ENCODE measurements at regions of chr1 and their contacts with region 1.

Region 1: DNA sequence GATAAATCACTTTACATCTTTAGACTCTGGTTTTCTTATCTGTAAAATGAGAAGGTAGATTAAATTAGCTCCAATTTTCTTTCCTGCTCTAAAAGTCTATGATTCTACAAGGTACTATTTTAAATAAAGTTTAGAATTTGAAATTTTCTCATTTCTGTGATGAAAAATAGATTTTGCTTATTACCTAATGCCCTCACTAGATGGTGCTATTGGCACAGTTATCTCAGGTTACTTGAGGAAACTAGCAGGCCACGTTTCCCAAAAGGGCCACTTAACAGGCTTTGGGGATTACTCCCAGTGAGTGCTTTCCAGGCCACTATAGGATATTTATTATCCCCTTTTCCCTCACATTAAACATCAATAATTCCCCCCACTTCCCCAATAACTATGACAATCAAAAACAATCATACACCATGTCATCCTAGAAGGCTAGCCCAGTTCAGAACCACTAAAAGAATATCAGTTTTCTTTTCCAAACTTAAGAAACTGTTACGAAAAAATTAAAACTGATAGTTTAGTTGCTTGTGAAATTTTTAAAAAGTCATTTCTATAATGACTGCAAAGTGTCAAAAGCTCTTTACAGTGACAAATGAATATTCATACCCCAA is 30.6 kb downstream of the OMA1 start:
- DNase-seq: peak; percentile 69
- ATAC-seq: peak; percentile 76
- H3K4me3 ChIP-seq: no peak overlapping the region
- H3K27ac ChIP-seq: no peak overlapping the region
- H3K4me1 ChIP-seq: no peaks in the 10 kb centered on the region
- H3K27me3 ChIP-seq: no peaks in the 10 kb centered on the region
- CTCF ChIP-seq: peak; percentile 49 to 77 (median 71)
- POLR2A ChIP-seq: no peak
- RAD21 ChIP-seq: peak; percentile 92

Region 2: DNA sequence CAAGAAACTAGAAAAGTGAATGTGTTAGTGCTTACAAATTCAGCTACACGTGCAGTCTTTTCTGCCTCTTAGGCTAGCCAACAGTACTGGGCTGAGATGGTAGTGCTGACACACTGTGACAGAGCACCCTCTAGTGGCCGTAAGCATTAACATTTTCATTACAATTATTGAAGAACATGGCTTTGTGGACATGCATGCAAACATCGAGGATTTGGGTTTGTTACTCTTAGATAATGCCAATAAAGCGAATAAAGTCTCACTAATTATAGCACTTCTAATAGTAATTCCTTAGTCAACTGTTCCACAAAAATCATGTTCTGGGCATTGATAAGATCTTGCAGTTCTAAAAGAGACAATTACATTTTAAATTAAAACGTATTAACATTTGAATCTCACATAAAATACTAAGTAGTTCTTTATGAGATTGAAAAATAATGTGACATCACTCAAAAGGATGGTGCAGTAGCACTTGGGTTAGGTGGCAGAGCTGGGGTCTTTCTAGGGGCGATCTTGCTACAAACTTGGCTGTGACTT is 136.8 kb after region 1 on chr1:
- CTCF ChIA-PET with region 1: interaction called, 33 read pairs
- POLR2A ChIA-PET with region 1: no interaction called
- RAD21 ChIA-PET with region 1: interaction called in 1 of 2 experiments, 4 read pairs
- intact Hi-C with region 1: loop called (anchors 1 kb)
- DNase-seq: peak; percentile 48
- ATAC-seq: peak; percentile 90
- H3K4me3 ChIP-seq: no peak overlapping the region
- H3K27ac ChIP-seq: no peak overlapping the region
- H3K4me1 ChIP-seq: no peaks in the 10 kb centered on the region
- H3K27me3 ChIP-seq: no peaks in the 10 kb centered on the region
- CTCF ChIP-seq: peak; percentile 69 to 92 (median 77)
- POLR2A ChIP-seq: no peak
- RAD21 ChIP-seq: peak; percentile 97

Region 3: DNA sequence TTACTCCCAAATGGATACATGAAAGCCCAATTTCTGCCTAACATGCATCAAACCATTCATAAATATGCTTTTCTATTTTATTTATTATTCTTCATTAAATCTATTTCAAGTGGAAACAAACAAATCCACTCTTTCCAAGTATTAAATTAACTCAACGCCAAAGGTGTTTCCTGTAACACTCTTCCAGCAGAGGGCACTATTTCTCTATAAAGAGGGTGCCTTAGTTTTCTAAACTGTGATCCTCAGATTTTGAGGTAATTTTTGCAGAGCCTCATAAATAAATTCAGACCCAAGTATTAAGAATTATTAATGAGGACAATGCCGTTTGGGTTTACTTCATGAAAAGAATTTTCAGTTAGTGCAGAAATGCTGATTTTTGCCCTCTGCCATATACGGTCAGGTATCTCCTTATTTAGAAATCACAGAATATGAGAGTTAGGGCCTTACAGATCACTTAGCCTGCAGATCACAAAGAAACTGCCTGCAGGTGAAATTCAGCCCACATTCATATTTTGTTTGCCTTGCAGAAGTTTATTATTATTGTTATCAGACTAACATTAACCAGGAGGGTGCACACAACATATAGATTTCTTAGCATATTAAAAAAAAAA is 224.1 kb after region 1 on chr1:
- CTCF ChIA-PET with region 1: no interaction called
- POLR2A ChIA-PET with region 1: no interaction called
- RAD21 ChIA-PET with region 1: no interaction called
- intact Hi-C with region 1: loop called (anchors 10 kb)
- DNase-seq: peak; percentile 39
- ATAC-seq: peak; percentile 75; the same call in 1 of the 2 replicates
- H3K4me3 ChIP-seq: no peak overlapping the region
- H3K27ac ChIP-seq: no peak overlapping the region
- H3K4me1 ChIP-seq: no peaks in the 10 kb centered on the region; a peak in 1 of 4 replicates
- H3K27me3 ChIP-seq: no peaks in the 10 kb centered on the region
- CTCF ChIP-seq: peak; percentile 59 to 87 (median 83)
- POLR2A ChIP-seq: no peak
- RAD21 ChIP-seq: peak; percentile 96

Region 4: DNA sequence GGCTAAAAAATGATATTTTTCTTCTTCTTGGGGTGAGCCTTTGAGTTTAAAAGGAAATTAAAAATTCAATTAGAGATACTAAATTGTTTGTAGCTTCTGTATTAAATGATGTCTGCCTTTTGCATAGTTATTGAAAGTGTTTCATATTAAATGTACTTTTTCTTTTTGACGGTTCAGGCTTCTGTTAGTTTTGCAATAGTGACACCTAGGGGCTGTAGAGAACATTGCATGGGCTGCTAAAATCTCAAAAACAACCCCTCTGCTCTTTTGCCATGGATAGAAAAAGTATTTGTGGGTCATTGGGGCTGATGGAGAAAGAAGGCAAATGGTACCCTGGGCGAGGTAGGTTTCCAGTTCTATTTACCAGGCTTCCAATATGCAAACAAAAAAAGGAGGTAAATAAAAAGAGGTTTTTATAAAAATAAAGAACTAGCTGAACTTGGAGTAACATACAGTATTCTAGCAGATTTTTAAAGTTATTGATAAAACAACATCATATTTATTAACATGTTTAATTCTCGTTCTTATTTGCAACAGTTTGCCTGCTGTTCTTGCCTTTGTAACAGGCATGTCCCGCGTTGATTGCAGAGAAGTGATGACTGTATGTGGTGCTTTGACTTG is 1183.4 kb after region 1 on chr1:
- CTCF ChIA-PET with region 1: no interaction called
- POLR2A ChIA-PET with region 1: no interaction called
- RAD21 ChIA-PET with region 1: no interaction called
- intact Hi-C with region 1: loop called (anchors 5 kb)
- DNase-seq: peak; percentile 15
- ATAC-seq: no peak
- H3K4me3 ChIP-seq: no peak overlapping the region
- H3K27ac ChIP-seq: no peak overlapping the region
- H3K4me1 ChIP-seq: no peaks in the 10 kb centered on the region
- H3K27me3 ChIP-seq: no peaks in the 10 kb centered on the region
- CTCF ChIP-seq: peak; percentile 67 to 93 (median 89); a peak in 5 of 6 replicates
- POLR2A ChIP-seq: no peak
- RAD21 ChIP-seq: peak; percentile 93

Region 5: GRCh38 chr1:59759156-59759925 is 1243.4 kb after region 1 on chr1:
- CTCF ChIA-PET with region 1: interaction called, 9 read pairs
- POLR2A ChIA-PET with region 1: no interaction called
- RAD21 ChIA-PET with region 1: no interaction called
- intact Hi-C with region 1: loop called (anchors 2 kb)
- DNase-seq: peak; percentile 59
- ATAC-seq: peak; percentile 96
- H3K4me3 ChIP-seq: 0 out of 4 replicates have a peak overlapping the region, but pooled peaks of 1 of the 2 experiments have one; percentile 7
- H3K27ac ChIP-seq: no peak overlapping the region
- H3K4me1 ChIP-seq: peaks cover 0 to 8% of the 10 kb centered on the region in 2 experiments; a peak in 2 of 4 replicates
- H3K27me3 ChIP-seq: no peaks in the 10 kb centered on the region
- CTCF ChIP-seq: peak; percentile 67 to 95 (median 92)
- POLR2A ChIP-seq: no peak
- RAD21 ChIP-seq: peak; percentile 99